AG04449 (cell line): ENCODE measurements at regions of chr3 and their contacts with region 1.

Region 1: GRCh38 chr3:51391075-51391567 is at the start of gene RBM15B:
- DNase-seq: peak; percentile 63
- H3K4me3 ChIP-seq: peak within 1 kb of the TSS; percentile 75
- CTCF ChIP-seq: peak; percentile 96

Region 2: DNA sequence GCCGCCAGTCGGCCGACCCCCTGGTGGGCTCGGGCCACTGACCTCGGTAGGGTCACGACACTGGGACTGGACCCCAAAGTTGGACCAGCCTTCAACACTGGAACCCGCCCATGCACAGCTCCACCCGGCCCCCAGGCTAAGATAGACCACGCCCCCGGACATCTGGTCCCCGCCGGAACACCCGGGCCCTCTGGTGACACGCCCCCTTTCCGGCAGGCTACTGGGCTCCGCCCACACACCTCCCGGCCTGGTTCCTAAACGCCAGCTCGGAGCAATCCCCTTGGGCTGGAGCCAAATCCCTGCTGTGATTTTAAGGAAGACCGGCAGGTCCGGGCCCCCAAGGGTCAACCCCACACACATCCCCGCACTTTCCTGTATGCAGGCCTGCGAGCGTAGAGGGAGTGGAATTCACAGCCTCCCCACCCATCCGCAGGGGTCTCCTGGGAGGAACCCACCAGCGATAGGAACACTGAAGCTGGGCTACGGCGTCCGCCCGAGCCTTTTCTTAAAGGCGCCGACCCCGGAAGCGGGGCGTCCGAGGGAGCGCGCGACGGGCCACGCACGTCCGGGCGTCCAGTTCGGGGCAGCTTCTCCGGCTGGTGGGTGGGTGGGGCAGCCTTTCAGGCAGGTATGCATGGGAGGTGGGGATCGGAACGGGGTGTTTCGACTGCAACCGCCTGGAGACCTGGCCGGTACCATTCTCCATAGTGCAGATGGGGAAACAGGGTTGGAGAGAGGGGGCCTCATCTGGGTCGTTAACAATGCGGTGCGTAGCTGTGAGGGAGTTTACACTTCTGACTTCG is 822.0 kb before region 1 on chr3 and contains the start of gene HEMK1:
- CTCF ChIA-PET with region 1: interaction called, 12 read pairs
- POLR2A ChIA-PET with region 1: no interaction called
- DNase-seq: peak; percentile 54
- H3K4me3 ChIP-seq: peak within 1 kb of the TSS; percentile 97
- CTCF ChIP-seq: no peak

Region 3: DNA sequence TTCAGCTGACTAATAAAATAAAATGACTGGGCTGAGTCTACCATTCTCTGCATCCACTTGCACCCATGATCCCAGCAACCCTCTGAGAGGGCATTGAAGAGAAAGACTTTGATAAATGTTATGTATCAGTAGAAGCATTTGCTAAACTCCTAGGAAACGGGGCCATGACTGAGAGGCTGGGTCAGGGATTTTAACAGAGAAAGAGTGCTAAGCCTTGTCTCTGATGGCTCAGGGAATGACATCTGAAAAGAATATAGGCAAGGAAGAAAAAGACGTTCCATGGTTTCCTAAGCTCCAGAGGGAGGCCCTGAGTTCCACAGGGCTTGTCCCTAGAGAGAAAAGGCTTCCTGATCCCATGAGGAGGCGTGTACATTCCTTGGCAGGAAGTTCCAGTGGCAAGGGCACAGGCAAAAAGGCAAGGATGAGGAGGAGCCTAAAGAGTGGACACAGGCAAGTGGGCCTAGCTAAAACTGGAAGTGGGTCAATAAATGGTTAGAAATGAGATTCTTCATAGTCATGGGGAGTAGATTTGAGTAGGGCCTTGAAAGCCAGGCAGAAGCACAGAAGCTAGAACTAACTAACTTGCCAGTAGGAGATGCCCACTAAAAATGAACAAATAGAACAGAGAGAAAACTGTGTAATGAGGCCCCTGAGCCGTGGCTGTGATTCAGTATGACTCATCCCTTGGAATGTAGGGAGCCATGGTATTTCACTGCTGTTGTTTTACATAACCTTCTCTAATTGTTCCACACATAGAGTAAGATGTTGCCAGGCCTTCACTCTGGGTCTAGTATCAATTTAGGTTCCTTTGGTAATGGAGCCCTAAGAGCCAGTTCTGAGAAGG is 50.9 kb before region 1 on chr3:
- CTCF ChIA-PET with region 1: interaction called, 28 read pairs
- POLR2A ChIA-PET with region 1: no interaction called
- DNase-seq: peak; percentile 75
- H3K4me3 ChIP-seq: no peak overlapping the region
- CTCF ChIP-seq: no peak

Region 4: DNA sequence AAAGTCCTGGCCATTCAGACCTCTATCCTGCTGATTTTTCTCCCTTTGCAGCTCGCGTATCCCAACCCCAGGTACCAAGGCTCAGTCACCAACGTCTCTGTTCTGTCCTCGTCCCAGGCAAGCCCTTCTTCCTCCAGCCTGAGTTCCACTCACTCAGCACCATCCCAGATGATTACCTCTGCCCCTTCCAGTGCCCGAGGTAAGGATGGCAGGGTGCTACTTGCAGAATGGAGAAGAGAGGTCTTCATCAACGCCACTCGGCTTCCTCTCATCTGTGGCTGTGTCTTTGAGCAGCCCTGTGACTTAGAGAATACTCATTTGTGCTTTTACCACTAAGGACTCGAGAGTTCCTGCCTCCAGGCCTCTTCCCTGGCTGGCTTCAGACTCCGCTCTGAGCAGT is 28.6 kb before region 1 on chr3:
- CTCF ChIA-PET with region 1: no interaction called
- POLR2A ChIA-PET with region 1: no interaction called
- DNase-seq: no peak
- H3K4me3 ChIP-seq: no peak overlapping the region
- CTCF ChIP-seq: no peak

Region 5: DNA sequence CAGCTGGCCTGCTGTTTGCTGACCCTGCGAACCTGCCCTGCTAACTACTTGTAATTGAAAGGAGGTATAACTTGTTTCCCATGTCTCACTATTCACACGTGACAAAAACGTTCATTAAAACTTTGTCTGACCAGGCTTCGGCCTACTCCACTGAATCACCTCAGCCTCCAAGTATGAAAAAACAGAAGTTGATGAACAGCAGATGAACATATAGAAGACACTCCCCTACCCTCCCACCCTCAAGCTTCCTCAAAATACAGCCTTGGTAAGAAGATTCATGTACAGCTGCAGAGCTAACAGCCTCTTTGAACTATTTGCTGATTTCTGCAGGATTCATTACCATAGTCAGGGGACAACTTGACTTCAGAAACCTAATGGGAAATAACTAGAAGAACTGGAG is 10.6 kb after region 1 on chr3:
- CTCF ChIA-PET with region 1: interaction called, 71 read pairs
- POLR2A ChIA-PET with region 1: no interaction called
- DNase-seq: no peak
- H3K4me3 ChIP-seq: no peak overlapping the region
- CTCF ChIP-seq: no peak

Region 6: GRCh38 chr3:51519848-51520247 is 128.7 kb after region 1 on chr3:
- CTCF ChIA-PET with region 1: no interaction called
- POLR2A ChIA-PET with region 1: no interaction called
- DNase-seq: no peak
- H3K4me3 ChIP-seq: no peak overlapping the region
- CTCF ChIP-seq: no peak

Region 7: GRCh38 chr3:51670823-51671733 is 280.0 kb after region 1 on chr3 and contains the start of gene TEX264:
- CTCF ChIA-PET with region 1: interaction called, 30 read pairs
- POLR2A ChIA-PET with region 1: no interaction called
- DNase-seq: no peak
- H3K4me3 ChIP-seq: peak within 1 kb of the TSS; percentile 82
- CTCF ChIP-seq: no peak

Region 8: DNA sequence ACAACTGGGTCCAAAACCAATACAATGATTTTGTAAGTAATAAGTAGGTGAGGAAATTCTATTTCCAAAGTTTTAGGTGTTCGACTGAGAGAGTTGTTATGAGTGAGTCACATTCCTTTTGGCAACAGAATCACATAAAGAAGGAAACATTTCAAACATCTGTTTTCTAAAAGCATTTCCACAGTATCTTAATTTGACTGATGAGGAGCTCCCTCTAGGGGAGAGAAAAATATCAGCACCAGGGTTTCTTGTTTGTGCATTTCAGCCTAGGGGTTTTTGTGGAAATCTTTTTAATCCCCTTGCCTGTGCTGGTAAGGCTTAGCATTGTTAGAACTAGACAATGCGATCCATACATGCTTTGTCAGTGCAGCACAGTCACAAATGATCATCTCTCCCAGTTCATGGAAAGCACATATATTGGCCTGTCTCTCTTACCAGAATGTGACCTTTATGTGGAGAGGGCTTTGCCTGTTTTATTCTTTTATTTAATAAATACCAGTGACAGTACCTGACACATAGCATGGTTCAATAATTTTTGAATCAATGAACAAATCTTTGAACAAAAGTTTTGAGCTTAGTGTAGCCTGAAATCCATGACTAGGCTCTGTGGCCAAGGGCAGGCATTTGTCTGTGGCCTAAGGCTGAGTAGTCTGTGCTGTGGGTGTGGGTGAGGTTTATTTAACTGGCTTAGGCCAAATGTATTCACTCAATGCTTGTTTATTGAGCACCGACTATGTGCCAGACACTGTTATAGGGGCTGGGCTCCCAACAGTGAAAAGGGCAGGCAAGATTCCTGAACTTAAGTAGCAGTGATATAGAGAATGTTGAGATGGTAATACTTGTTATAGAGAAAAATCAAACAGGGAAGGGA is 409.0 kb after region 1 on chr3:
- CTCF ChIA-PET with region 1: interaction called, 20 read pairs
- POLR2A ChIA-PET with region 1: no interaction called
- DNase-seq: peak; percentile 37
- H3K4me3 ChIP-seq: no peak overlapping the region
- CTCF ChIP-seq: peak; percentile 48